ENCODE measurements at regions of chr5 and their contacts with region 1.

Region 1: GRCh38 chr5:37722236-37723146 is 117.3 kb downstream of the GDNF start:
- DNase-seq: no peak
- H3K4me3 ChIP-seq: no peak overlapping the region
- H3K27ac ChIP-seq: no peak overlapping the region
- H3K4me1 ChIP-seq: peaks cover 0 to 6% (median 2%) of the 10 kb centered on the region in 4 experiments; a peak in 3 of 7 replicates
- H3K27me3 ChIP-seq: no peaks in the 10 kb centered on the region
- CTCF ChIP-seq: no peak
- EP300 ChIP-seq: no peak
- POLR2A ChIP-seq: no peak
- RAD21 ChIP-seq: no peak

Region 2: GRCh38 chr5:37412515-37413277 is 309.8 kb before region 1 on chr5:
- CTCF ChIA-PET with region 1: interaction called, 12 read pairs
- POLR2A ChIA-PET with region 1: no interaction called
- DNase-seq: peak in 1 of 2 experiments; percentile 23
- H3K4me3 ChIP-seq: no peak overlapping the region
- H3K27ac ChIP-seq: no peak overlapping the region
- H3K4me1 ChIP-seq: no peaks in the 10 kb centered on the region
- H3K27me3 ChIP-seq: no peaks in the 10 kb centered on the region
- CTCF ChIP-seq: peak in 2 of 3 experiments; percentile 91 to 98; a peak in 3 of 4 replicates
- EP300 ChIP-seq: no peak
- POLR2A ChIP-seq: no peak
- RAD21 ChIP-seq: peak; percentile 92 to 93

Region 3: GRCh38 chr5:37490120-37490806 is 232.2 kb before region 1 on chr5:
- CTCF ChIA-PET with region 1: no interaction called
- POLR2A ChIA-PET with region 1: no interaction called
- DNase-seq: no peak
- H3K4me3 ChIP-seq: no peak overlapping the region
- H3K27ac ChIP-seq: no peak overlapping the region
- H3K4me1 ChIP-seq: no peaks in the 10 kb centered on the region
- H3K27me3 ChIP-seq: no peaks in the 10 kb centered on the region
- CTCF ChIP-seq: no peak
- EP300 ChIP-seq: no peak
- POLR2A ChIP-seq: no peak
- RAD21 ChIP-seq: no peak

Region 4: DNA sequence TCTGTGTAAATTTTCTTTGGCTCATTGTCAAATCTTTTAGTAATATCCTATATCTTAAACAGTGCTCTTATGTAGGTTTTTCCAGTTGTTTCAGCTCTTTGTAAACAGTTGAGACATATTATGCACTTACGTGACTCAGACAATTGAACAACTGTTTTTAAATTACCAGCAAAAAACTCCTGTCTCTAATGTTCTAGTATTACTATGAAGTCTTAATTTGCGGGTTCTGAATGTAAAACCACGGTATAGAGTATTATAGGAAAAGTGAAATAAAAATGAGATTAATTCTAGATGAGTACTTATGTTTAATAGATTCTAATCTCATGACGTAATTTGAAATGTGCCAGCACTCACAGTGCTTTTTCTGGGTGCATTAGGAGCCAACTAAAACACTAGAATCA is 18.6 kb before region 1 on chr5:
- CTCF ChIA-PET with region 1: interaction called, 13 read pairs
- POLR2A ChIA-PET with region 1: no interaction called
- DNase-seq: no peak
- H3K4me3 ChIP-seq: no peak overlapping the region
- H3K27ac ChIP-seq: no peak overlapping the region
- H3K4me1 ChIP-seq: no peaks in the 10 kb centered on the region
- H3K27me3 ChIP-seq: no peaks in the 10 kb centered on the region
- CTCF ChIP-seq: no peak
- EP300 ChIP-seq: no peak
- POLR2A ChIP-seq: no peak
- RAD21 ChIP-seq: no peak

Region 5: GRCh38 chr5:37710965-37711364 is 11.5 kb before region 1 on chr5:
- CTCF ChIA-PET with region 1: interaction called, 37 read pairs
- POLR2A ChIA-PET with region 1: no interaction called
- DNase-seq: no peak
- H3K4me3 ChIP-seq: no peak overlapping the region
- H3K27ac ChIP-seq: no peak overlapping the region
- H3K4me1 ChIP-seq: no peaks in the 10 kb centered on the region
- H3K27me3 ChIP-seq: no peaks in the 10 kb centered on the region
- CTCF ChIP-seq: no peak
- EP300 ChIP-seq: no peak
- POLR2A ChIP-seq: no peak
- RAD21 ChIP-seq: no peak

Region 6: GRCh38 chr5:37738057-37738691 is 15.7 kb after region 1 on chr5:
- CTCF ChIA-PET with region 1: interaction called, 113 read pairs
- POLR2A ChIA-PET with region 1: no interaction called
- DNase-seq: no peak
- H3K4me3 ChIP-seq: no peak overlapping the region
- H3K27ac ChIP-seq: no peak overlapping the region
- H3K4me1 ChIP-seq: no peaks in the 10 kb centered on the region
- H3K27me3 ChIP-seq: no peaks in the 10 kb centered on the region
- CTCF ChIP-seq: no peak
- EP300 ChIP-seq: no peak
- POLR2A ChIP-seq: no peak
- RAD21 ChIP-seq: no peak

Region 7: DNA sequence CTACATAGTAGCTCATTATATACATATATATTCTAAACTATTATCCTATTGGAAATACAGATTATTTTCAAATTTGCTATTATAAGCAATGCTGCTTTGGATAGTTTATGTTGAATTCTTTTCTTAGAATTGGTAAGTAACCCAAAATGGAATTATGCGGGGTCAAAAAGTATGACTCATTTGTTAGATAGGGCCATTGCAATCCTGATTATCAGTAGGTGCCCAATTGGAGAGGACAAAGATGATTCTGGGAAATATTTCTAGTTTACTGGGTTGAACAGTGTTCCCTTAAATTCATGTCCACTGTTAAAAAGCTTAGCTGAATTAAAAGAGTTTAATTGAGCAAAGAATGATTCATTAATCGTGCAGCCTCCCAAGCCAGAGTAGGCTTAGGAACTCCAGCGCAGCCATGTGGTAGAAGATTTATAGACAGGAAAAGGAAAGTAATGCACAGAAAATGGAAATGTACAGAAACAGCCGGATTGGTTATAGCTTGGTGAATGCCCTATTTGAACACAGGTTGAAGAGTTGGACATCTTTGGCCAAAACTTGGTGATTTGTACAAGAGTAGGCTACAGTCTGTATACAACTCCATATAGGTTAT is 35.6 kb after region 1 on chr5:
- CTCF ChIA-PET with region 1: interaction called, 13 read pairs
- POLR2A ChIA-PET with region 1: no interaction called
- DNase-seq: no peak
- H3K4me3 ChIP-seq: no peak overlapping the region
- H3K27ac ChIP-seq: no peak overlapping the region
- H3K4me1 ChIP-seq: no peaks in the 10 kb centered on the region
- H3K27me3 ChIP-seq: no peaks in the 10 kb centered on the region
- CTCF ChIP-seq: peak in 2 of 3 experiments; percentile 1 to 7; a peak in 2 of 4 replicates
- EP300 ChIP-seq: no peak
- POLR2A ChIP-seq: no peak
- RAD21 ChIP-seq: peak; percentile 12 to 17; a peak in 2 of 4 replicates

Region 8: GRCh38 chr5:37825334-37825915 is 102.9 kb after region 1 on chr5:
- CTCF ChIA-PET with region 1: interaction called, 17 read pairs
- POLR2A ChIA-PET with region 1: no interaction called
- DNase-seq: no peak
- H3K4me3 ChIP-seq: no peak overlapping the region
- H3K27ac ChIP-seq: no peak overlapping the region
- H3K4me1 ChIP-seq: peaks cover 0 to 5% (median 2%) of the 10 kb centered on the region in 4 experiments; a peak in 3 of 7 replicates
- H3K27me3 ChIP-seq: peaks cover 0 to 3% (median 0%) of the 10 kb centered on the region in 4 experiments; a peak in 3 of 7 replicates
- CTCF ChIP-seq: no peak
- EP300 ChIP-seq: no peak
- POLR2A ChIP-seq: no peak
- RAD21 ChIP-seq: no peak; a peak in 1 of 4 replicates